Dorsolateral prefrontal cortex (tissue), 120 donors: ENCODE measurements at regions of chr18 and their contacts with region 1.

Region 1: DNA sequence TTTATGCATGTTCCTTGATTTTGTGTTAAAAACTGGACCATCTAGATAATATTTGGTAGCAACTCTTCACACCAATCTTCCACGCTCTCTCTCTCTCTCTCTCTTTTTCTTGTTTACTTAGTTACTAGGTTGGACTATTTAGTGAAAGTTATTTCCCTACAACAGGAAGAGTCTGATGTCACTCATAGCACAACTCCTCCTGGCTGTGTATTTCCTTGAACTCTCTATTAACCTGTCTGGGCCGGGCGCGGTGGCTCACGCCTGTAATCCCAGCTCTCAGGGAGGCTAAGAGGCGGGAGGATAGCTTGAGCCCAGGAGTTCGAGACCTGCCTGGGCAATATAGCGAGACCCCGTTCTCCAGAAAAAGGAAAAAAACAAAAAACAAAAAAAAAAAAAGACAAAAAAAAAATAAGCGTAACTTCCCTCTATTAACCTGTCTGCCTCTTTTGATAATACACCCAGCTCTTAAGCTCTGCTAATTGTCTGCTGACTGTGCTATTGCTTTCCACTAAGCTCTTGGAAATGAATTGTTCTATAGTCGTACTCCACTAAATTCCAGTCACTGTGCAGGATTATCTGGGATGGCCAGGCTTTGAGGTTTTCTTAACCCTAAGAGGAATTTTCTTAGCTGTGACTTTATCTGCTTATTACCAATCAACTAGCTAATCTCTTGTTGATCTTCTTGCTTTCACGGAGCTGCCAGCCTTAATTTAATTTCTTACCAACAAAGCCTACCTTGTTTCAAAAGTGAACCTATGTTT is 18.1 kb upstream of the CDH19 start:
- DNase-seq: no peak
- H3K4me3 ChIP-seq: no peak overlapping the region
- H3K27ac ChIP-seq: no peak overlapping the region
- H3K27me3 ChIP-seq: no peaks in the 10 kb centered on the region
- CTCF ChIP-seq: no peak

Region 2: DNA sequence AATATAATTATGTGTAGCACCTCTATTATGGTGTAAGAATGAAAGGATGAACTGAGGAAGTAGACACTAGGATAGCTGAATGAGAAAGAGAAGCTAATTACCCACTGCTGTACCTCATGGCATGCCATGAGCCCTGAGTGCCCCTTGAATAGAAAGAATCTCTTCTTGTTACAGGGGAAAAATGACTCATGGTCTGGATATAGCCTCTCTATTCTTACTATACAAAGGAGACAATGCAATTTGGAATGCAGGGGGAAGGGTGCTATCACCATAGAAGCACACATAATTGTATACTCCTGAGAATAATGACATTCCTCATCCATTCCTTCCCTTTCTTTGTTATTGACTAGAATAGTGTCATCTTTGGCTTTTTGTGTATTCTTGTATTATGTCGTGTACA is 486.0 kb before region 1 on chr18:
- intact Hi-C with region 1: no loop called
- DNase-seq: no peak
- H3K4me3 ChIP-seq: no peak overlapping the region
- H3K27ac ChIP-seq: no peak overlapping the region
- H3K27me3 ChIP-seq: peaks cover 0 to 5% (median 0%) of the 10 kb centered on the region in 45 donors
- CTCF ChIP-seq: no peak

Region 3: GRCh38 chr18:66676699-66677098 is 54.7 kb after region 1 on chr18:
- intact Hi-C with region 1: loop called in 1 of 2 experiments (anchors 10 kb)
- DNase-seq: no peak
- H3K4me3 ChIP-seq: no peak overlapping the region
- H3K27ac ChIP-seq: no peak overlapping the region
- H3K27me3 ChIP-seq: no peaks in the 10 kb centered on the region
- CTCF ChIP-seq: no peak